Dorsolateral prefrontal cortex (tissue), 120 donors: ENCODE measurements at regions of chr9 and their contacts with region 1.

Region 1: GRCh38 chr9:6055213-6055612 is 39.8 kb upstream of the RANBP6 start:
- DNase-seq: peak in 2 of 10 donors; percentile 9 to 15
- H3K4me3 ChIP-seq: no peak overlapping the region
- H3K27ac ChIP-seq: no peak overlapping the region
- H3K27me3 ChIP-seq: no peaks in the 10 kb centered on the region
- CTCF ChIP-seq: peak; percentile 48 to 75 (median 66)

Region 2: DNA sequence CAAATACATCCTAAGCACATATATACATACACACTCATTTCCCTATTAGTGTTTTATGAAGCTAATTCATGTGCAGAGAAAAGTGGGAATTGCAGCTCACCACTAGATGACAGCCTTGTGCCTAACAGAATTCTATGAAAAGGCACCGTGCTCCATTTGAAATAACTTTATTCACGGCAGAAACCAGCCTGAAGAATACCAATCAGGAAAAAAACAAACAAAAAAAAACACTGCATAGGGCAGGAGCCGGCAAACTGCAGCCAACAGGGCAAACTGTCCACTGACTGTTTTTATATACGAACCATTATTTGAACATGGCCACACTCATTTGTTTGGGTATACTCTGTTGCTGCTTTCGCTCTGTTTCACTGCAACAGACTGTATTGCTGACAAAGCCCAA is 255.9 kb before region 1 on chr9:
- intact Hi-C with region 1: loop called in 1 of 2 experiments (anchors 10 kb)
- DNase-seq: peak in 1 of 10 donors; percentile 57
- H3K4me3 ChIP-seq: peak overlapping the region in 52 of 59 donors; percentile 6 to 63 (median 40)
- H3K27ac ChIP-seq: peak overlapping the region in 28 of 59 donors; percentile 2 to 77 (median 45)
- H3K27me3 ChIP-seq: no peaks in the 10 kb centered on the region
- CTCF ChIP-seq: peak; percentile 48 to 91 (median 78)

Region 3: DNA sequence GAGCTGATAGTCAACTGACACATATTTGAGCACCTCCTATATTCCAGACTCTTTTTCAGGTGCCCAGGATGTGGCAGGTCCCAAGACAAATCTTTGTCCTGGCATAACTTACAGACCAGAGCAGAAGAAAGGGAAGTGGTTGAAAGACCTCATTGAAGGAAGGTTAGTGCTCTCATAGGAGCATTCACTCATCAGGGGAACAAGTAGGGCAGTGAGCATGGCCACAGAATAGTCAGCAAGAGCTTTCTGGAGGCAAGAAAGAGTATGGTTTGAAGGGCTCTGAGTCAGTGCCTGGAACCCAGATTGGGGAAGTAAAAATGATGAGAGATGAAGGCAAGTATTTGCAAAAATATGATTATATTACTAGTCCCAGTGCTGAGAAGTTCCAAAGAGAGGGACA is 197.3 kb before region 1 on chr9:
- intact Hi-C with region 1: no loop called
- DNase-seq: no peak
- H3K4me3 ChIP-seq: no peak overlapping the region
- H3K27ac ChIP-seq: no peak overlapping the region
- H3K27me3 ChIP-seq: no peaks in the 10 kb centered on the region
- CTCF ChIP-seq: no peak

Region 4: DNA sequence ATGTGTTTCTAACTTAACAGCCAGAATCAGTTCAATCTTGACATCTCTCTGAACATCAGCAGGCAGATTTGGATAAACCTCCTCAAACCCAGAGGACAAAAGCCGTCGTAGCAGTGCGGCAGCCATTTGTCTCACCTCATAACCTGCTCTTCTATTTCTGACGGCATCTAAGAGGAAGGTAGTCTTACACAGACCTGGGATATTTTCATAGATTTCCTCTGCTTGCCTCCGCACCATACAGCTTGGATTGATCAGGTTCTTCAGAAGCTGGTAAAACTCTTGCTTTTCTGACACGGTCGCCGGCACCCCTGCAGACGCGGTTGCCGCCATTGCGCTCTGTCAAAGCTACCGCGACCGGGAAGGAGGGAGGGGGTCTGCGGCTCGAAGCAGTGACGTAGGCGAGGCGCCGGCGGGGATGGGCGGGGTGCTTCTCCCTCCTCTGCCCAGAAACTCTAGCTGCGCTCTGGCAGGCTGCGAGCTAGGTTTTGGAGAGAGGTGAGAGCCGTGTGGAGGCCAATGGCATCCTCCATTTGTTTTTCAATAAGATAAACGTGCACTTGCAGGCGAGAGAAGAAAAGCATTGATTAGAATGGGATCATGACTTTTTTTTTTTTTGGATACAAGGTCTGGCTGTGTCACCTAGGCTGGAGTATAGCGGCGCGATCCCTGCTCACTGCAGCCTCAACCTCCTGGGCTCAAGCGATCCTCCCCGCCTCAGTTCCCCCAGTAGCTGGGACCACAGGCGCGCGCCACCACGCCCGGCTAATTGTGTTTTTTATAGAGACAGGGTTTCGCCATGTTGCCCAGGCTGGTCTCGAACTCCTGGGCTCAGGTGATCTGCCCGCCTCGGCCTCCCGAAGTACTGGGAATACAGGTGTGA is 39.7 kb before region 1 on chr9 and contains the start of gene RANBP6:
- intact Hi-C with region 1: loop called in 1 of 2 experiments (anchors 5 kb)
- DNase-seq: peak; percentile 88 to 96 (median 94)
- H3K4me3 ChIP-seq: peak within 1 kb of the TSS; percentile 39 to 98 (median 84)
- H3K27ac ChIP-seq: peak within 1 kb of the TSS; percentile 6 to 97 (median 86)
- H3K27me3 ChIP-seq: no peaks in the 10 kb centered on the region
- CTCF ChIP-seq: peak in 23 of 56 donors; percentile 6 to 51 (median 23)
- total RNA-seq, gene RANBP6: 17.7 to 48.0 (median 33.6) TPM

Region 5: GRCh38 chr9:6109986-6110385 is 54.8 kb after region 1 on chr9:
- intact Hi-C with region 1: no loop called
- DNase-seq: no peak
- H3K4me3 ChIP-seq: no peak overlapping the region
- H3K27ac ChIP-seq: peak overlapping the region in 19 of 59 donors; percentile 1 to 64 (median 41)
- H3K27me3 ChIP-seq: no peaks in the 10 kb centered on the region
- CTCF ChIP-seq: no peak

Region 6: GRCh38 chr9:6305954-6306563 is 250.8 kb after region 1 on chr9:
- intact Hi-C with region 1: loop called (anchors 2 to 5 kb)
- DNase-seq: no peak
- H3K4me3 ChIP-seq: no peak overlapping the region
- H3K27ac ChIP-seq: no peak overlapping the region
- H3K27me3 ChIP-seq: peaks cover 0 to 9% (median 0%) of the 10 kb centered on the region in 45 donors
- CTCF ChIP-seq: peak; percentile 23 to 88 (median 71)